ENCODE measurements at regions of chr3 and their contacts with region 1.

Region 1: DNA sequence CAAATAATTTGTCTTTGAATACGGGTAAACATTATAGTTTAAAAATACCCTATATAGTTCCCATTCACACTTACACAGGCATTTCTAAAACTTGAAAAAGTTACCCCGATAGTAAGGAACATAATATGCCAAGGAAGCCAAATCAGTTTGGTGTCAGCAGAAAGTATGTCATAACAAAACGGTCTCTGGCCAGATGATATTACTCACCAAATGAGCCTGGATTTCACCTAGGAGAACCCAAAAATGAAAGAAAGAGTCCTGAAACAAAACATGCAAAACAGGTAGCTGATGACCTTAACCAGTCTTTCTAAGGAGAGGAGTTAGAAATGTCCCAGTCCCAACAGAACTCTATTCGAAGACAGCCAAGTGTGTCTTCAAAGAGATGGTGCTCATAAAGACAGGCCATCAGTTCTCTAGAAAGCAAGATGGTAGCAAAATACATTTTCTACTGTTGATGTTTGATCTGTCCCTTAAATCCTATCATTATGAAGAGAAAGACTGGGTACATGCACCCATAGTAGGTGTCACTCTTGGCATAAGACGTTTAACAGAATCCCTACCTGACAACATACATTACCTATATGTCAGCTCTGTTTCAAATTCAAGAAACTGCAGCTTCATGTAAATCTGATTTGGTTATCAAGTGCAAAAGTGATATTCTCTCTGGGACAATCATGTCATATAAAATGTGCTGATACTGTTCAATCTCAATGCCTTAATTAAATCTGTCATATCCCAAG is 942.5 kb downstream of the ROBO1 start:
- DNase-seq: no peak
- ATAC-seq: no peak
- H3K4me3 ChIP-seq: no peak overlapping the region
- H3K27ac ChIP-seq: no peak overlapping the region
- H3K4me1 ChIP-seq: peaks cover 40% of the 10 kb centered on the region
- H3K27me3 ChIP-seq: no peaks in the 10 kb centered on the region
- CTCF ChIP-seq: no peak
- EP300 ChIP-seq: no peak
- POLR2A ChIP-seq: no peak
- RAD21 ChIP-seq: no peak

Region 2: GRCh38 chr3:78872195-78872594 is 46.9 kb after region 1 on chr3:
- CTCF ChIA-PET with region 1: no interaction called
- POLR2A ChIA-PET with region 1: no interaction called
- in situ Hi-C with region 1: no loop called
- intact Hi-C with region 1: loop called (anchors 1 kb)
- DNase-seq: peak; percentile 89
- ATAC-seq: peak; percentile 92
- H3K4me3 ChIP-seq: peak overlapping the region in 2 of 3 experiments; percentile 31 to 32; a peak in 2 of 6 replicates
- H3K27ac ChIP-seq: peak overlapping the region; percentile 72
- H3K4me1 ChIP-seq: peaks cover 83% of the 10 kb centered on the region
- H3K27me3 ChIP-seq: no peaks in the 10 kb centered on the region
- CTCF ChIP-seq: no peak
- EP300 ChIP-seq: peak in 1 of 2 experiments; percentile 82; a peak in 2 of 4 replicates
- POLR2A ChIP-seq: no peak
- RAD21 ChIP-seq: no peak

Measured in HepG2 (cell line).